ENCODE measurements at regions of chr3 and their contacts with region 1.

Region 1: DNA sequence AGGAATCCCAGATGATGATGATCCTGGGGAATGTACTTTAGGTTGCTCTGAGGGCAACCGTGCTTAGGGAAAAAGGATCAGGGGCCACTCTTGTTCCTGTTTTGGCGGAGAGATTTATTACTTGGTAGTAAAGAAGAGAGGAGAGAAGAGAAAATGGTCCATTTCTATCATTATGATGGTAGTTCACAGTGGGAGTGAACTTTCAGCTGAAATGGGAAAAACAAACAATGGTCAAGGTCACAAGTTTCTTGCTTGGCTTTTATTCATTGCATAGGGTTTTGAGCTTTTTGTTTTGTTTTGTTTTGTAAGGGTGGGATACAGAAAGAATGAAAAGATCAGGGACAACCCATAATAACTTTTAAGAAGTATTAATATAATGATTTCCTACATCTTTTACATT is 7.7 kb upstream of the UMPS start:
- DNase-seq: no peak
- H3K4me3 ChIP-seq: no peak overlapping the region
- H3K4me3 Mint-ChIP-seq: no peak overlapping the region
- H3K27ac ChIP-seq: no peak overlapping the region
- H3K27ac Mint-ChIP-seq: no peak overlapping the region
- H3K4me1 ChIP-seq: no peaks in the 10 kb centered on the region
- H3K4me1 Mint-ChIP-seq: no peaks in the 10 kb centered on the region
- H3K27me3 ChIP-seq: peaks cover 14% of the 10 kb centered on the region
- H3K27me3 Mint-ChIP-seq: peaks cover 29 to 38% of the 10 kb centered on the region in 2 donors

Region 2: GRCh38 chr3:123960781-123961507 is 761.6 kb before region 1 on chr3 and contains the start of gene CCDC14:
- CTCF ChIA-PET with region 1: no interaction called
- POLR2A ChIA-PET with region 1: no interaction called
- intact Hi-C with region 1: loop called (anchors 10 kb)
- DNase-seq: peak; percentile 61 to 83 (median 65)
- H3K4me3 ChIP-seq: peak within 1 kb of the TSS; percentile 27 to 93
- H3K4me3 Mint-ChIP-seq: peak within 1 kb of the TSS; percentile 96 to 99 (median 98)
- H3K27ac ChIP-seq: peak within 1 kb of the TSS; percentile 65
- H3K27ac Mint-ChIP-seq: peak within 1 kb of the TSS; percentile 88 to 97 (median 93)
- H3K4me1 ChIP-seq: peaks cover 26% of the 10 kb centered on the region
- H3K4me1 Mint-ChIP-seq: peaks cover 13 to 38% (median 23%) of the 10 kb centered on the region in 4 donors
- H3K27me3 ChIP-seq: no peaks in the 10 kb centered on the region
- H3K27me3 Mint-ChIP-seq: peaks cover 0 to 2% of the 10 kb centered on the region in 2 donors
- total RNA-seq, gene CCDC14: 46.0 to 47.0 TPM

Region 3: DNA sequence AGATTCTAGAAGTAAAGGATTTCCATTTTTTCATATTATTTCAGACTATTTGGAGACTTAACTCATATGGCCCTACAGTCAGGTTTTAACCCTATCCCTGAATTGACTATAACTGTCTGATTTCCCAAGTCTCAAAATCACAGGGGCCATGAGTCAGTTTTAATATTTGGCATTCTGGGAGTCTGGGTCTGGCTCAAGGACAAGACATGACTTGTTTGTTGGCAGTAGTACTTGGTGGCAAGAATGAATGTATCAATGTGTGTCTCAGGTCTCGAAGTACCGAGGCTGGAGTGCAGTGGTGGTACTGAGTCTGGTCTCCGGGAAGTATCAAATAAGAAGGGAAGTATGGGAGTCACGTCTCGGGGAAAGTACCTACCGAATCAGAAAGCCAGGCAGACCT is 18.4 kb after region 1 on chr3:
- CTCF ChIA-PET with region 1: no interaction called
- POLR2A ChIA-PET with region 1: no interaction called
- intact Hi-C with region 1: no loop called
- DNase-seq: no peak
- H3K4me3 ChIP-seq: no peak overlapping the region
- H3K4me3 Mint-ChIP-seq: no peak overlapping the region
- H3K27ac ChIP-seq: no peak overlapping the region
- H3K27ac Mint-ChIP-seq: no peak overlapping the region
- H3K4me1 ChIP-seq: no peaks in the 10 kb centered on the region
- H3K4me1 Mint-ChIP-seq: peaks cover 8 to 12% (median 11%) of the 10 kb centered on the region in 4 donors
- H3K27me3 ChIP-seq: no peaks in the 10 kb centered on the region
- H3K27me3 Mint-ChIP-seq: no peaks in the 10 kb centered on the region